ENCODE measurements at regions of chr11 and their contacts with region 1.

Region 1: DNA sequence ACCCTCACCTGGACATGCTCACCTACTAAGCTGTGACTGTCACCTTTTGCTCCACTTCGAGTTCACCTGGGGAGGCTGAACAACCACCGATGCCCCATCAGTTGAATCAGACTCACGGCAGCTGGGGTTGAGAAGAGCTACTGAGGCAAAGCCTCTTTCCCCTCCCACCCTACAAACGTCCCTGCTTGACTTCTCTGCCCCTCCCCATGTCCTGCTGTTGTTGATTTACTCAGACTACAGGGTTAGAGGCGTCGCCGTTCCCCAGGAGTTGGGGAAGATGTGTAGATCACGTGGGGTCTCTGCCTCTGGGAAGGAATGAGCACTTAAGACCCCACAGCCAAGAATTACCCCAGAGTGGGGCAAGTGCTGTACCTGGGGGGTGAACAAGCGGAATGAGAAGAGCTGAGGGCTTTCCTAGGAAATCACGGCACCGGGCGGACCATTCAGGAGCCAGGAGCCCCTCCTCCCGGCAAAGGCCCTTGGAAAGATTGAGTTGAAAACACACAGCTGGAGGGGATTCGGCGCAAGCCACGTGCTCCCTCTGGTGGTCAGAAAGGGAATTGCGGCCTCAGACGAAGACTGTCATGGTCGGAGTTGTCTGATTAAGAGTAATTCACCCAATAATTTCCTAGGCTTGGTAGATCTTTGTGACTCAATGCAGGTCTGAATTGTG is 7.0 kb downstream of the FXYD2 start:
- DNase-seq: peak; percentile 64 to 91 (median 76)
- ATAC-seq: peak; percentile 46
- H3K4me3 ChIP-seq: no peak overlapping the region
- H3K4me3 Mint-ChIP-seq: peak overlapping the region; percentile 4 to 83 (median 38)
- H3K27ac ChIP-seq: no peak overlapping the region
- H3K27ac Mint-ChIP-seq: peak overlapping the region; percentile 61 to 93 (median 80)
- H3K4me1 ChIP-seq: peaks cover 44 to 56% of the 10 kb centered on the region in 2 donors
- H3K4me1 Mint-ChIP-seq: peaks cover 35 to 63% (median 51%) of the 10 kb centered on the region in 7 donors
- H3K27me3 ChIP-seq: no peaks in the 10 kb centered on the region
- H3K27me3 Mint-ChIP-seq: no peaks in the 10 kb centered on the region

Region 2: DNA sequence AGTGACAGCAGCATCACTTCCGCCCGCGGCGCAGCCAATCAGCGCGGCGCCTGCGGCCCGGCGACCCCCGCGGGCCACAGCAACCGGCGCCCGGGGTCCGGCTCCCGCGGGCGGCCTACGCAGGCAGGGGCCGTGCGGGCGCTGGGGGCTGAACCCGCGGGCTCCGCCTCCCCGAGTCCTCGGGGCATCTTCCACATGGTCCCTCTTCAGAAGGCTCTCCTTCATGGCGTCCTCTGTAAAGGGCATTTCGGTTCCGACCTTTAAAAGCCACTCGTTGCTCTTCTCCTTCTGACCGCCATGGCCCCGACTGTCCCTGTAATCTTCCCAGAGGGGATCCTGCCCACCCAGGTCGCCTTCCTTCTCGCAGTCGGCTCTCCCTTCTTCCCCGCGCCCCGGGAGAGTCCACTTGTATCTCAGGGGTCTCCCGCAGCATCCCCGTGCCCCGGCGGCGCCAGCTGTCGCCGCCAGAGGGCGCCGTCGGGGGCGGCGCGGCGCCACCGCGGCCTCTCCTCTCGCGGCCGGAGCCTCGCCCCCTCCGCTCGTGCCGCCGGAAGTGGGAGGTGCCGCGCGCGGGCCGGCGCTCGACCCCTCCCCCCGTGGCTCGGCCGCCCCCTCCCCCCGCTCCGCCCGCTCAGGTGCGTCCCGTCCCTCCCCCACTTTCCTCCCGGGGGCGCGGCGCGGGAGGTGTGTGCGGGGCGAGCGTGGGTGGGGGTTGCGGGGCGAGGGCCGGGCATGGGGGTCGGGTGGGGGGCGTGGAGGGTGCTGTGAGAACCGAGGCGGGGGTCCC is 585.2 kb before region 1 on chr11 and contains the start of gene RNF214:
- CTCF ChIA-PET with region 1: no interaction called
- POLR2A ChIA-PET with region 1: no interaction called
- intact Hi-C with region 1: loop called in 1 of 2 experiments (anchors 1 kb)
- DNase-seq: peak; percentile 61 to 84 (median 73)
- ATAC-seq: peak; percentile 92
- H3K4me3 ChIP-seq: peak within 1 kb of the TSS; percentile 96
- H3K4me3 Mint-ChIP-seq: peak within 1 kb of the TSS; percentile 91 to 100 (median 98)
- H3K27ac ChIP-seq: peak within 1 kb of the TSS; percentile 97
- H3K27ac Mint-ChIP-seq: peak within 1 kb of the TSS; percentile 94 to 100 (median 99)
- H3K4me1 ChIP-seq: peaks cover 32 to 35% of the 10 kb centered on the region in 2 donors
- H3K4me1 Mint-ChIP-seq: peaks cover 40 to 55% (median 50%) of the 10 kb centered on the region in 7 donors
- H3K27me3 ChIP-seq: no peaks in the 10 kb centered on the region
- H3K27me3 Mint-ChIP-seq: no peaks in the 10 kb centered on the region
- total RNA-seq, gene RNF214: 16.6 to 36.0 (median 24.0) TPM

Region 3: DNA sequence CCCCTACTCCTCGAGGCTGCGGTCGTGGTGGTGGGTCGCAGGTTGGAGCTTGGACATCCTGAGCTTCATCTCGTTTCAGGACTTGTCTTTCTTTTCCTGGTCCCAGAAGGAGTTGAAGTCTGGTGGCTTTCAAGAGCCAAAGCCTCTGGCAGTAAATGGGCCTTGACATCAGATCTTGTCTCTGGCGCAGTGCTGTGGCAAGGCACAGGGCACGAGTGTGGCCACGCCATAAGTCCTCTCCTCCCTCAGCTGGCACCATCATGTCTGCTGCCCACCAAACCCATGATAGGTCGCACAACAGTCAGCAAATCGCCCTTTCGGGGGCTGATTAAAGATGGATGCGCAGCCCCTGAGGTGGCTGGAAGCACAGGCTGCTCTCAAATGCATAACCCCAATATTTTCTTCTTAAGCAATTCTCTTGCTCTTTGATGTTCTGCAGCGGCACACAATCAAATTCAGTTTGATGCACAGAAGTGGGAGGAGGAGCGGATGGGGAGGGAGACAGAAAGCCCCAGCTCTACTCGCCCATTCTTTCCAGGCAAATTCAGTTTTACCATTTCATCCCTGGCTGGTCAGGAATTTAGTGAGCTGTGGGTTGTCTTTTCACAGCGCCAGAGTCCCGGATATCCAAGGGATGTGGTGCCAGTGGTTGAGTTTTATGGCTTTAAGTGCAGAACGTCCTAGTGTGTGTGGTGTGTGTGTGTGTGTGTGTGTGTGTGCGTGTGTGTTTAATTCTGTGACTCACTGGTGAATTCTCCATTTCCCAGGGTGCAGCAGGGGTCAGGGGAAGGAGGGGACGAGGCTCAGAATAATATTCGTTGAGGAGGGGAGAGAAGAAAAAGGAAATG is 182.5 kb before region 1 on chr11:
- CTCF ChIA-PET with region 1: no interaction called
- POLR2A ChIA-PET with region 1: no interaction called
- intact Hi-C with region 1: no loop called
- DNase-seq: no peak
- ATAC-seq: no peak
- H3K4me3 ChIP-seq: no peak overlapping the region
- H3K4me3 Mint-ChIP-seq: no peak overlapping the region
- H3K27ac ChIP-seq: no peak overlapping the region
- H3K27ac Mint-ChIP-seq: peak overlapping the region in 1 of 9 donors; percentile 26
- H3K4me1 ChIP-seq: no peaks in the 10 kb centered on the region
- H3K4me1 Mint-ChIP-seq: no peaks in the 10 kb centered on the region
- H3K27me3 ChIP-seq: no peaks in the 10 kb centered on the region
- H3K27me3 Mint-ChIP-seq: peaks cover 0 to 7% (median 3%) of the 10 kb centered on the region in 5 donors

Region 4: DNA sequence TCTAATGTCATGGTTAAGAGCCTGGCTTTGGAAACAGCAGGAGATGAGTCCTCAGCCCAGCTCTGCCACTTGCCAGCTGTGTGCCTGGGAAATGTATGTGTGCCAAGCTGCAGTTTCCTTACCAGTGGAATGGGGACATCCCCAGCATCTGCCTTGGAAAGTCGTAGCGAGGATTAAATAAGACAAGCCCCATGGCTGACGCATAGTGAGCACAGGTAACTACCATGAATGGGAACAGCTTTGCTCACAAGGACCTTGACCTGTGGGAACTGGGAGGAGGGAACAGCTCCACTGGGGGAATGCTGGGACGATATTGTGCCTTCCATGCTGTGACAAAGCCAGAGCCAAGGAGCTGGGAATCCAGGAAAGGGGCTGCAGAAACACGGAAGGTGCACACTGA is 17.9 kb before region 1 on chr11:
- CTCF ChIA-PET with region 1: interaction called, 189 read pairs
- POLR2A ChIA-PET with region 1: interaction called, 4 read pairs
- intact Hi-C with region 1: no loop called
- DNase-seq: no peak
- ATAC-seq: no peak
- H3K4me3 ChIP-seq: no peak overlapping the region
- H3K4me3 Mint-ChIP-seq: no peak overlapping the region
- H3K27ac ChIP-seq: no peak overlapping the region
- H3K27ac Mint-ChIP-seq: no peak overlapping the region
- H3K4me1 ChIP-seq: peaks cover 0 to 15% of the 10 kb centered on the region in 2 donors
- H3K4me1 Mint-ChIP-seq: peaks cover 3 to 21% (median 16%) of the 10 kb centered on the region in 7 donors
- H3K27me3 ChIP-seq: peaks cover 5 to 14% of the 10 kb centered on the region in 2 donors
- H3K27me3 Mint-ChIP-seq: peaks cover 22 to 57% (median 26%) of the 10 kb centered on the region in 5 donors

Region 5: DNA sequence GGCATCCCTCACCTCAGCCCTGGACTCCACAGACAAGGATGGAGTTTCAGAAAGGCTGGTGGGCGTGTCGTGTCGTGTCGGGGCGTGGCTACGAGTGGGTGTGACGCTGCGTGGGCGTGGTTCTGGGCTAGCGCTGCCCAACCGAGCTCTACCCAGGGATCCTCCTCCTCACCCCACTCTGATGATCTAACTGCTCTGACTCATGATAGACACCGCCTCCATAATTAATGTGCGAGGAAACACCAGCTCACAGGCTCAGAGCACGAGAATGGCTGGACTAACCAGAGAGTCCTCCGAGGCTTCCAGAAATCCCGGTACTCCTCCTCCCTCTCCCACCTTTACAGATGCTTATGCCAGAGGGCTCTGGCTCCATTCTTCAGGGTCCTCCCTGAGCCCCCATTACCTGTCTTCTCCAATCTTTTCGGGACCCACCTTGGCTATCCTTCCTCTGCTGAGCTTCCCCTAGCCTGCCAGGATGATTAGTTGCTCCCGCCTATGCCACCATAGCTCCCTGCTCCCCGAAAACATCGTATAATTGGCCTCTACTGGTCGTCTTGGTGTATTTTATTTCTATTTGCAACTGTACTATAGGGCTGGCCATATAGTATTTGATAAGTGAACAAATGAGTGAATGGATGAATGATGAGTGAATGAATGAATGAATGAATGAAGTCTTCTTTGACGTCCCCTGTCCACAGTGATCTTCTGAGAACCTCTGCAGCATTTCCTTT is 89.9 kb after region 1 on chr11:
- CTCF ChIA-PET with region 1: no interaction called
- POLR2A ChIA-PET with region 1: no interaction called
- intact Hi-C with region 1: loop called in 1 of 2 experiments (anchors 5 kb)
- DNase-seq: peak in 5 of 9 donors; percentile 11 to 81 (median 28)
- ATAC-seq: peak; percentile 99
- H3K4me3 ChIP-seq: no peak overlapping the region
- H3K4me3 Mint-ChIP-seq: peak overlapping the region in 1 of 10 donors; percentile 63
- H3K27ac ChIP-seq: no peak overlapping the region
- H3K27ac Mint-ChIP-seq: peak overlapping the region in 2 of 9 donors; percentile 3 to 83
- H3K4me1 ChIP-seq: no peaks in the 10 kb centered on the region
- H3K4me1 Mint-ChIP-seq: peaks cover 0 to 19% (median 0%) of the 10 kb centered on the region in 7 donors
- H3K27me3 ChIP-seq: no peaks in the 10 kb centered on the region
- H3K27me3 Mint-ChIP-seq: peaks cover 0 to 2% (median 0%) of the 10 kb centered on the region in 5 donors

Region 6: GRCh38 chr11:119381181-119381988 is 1563.9 kb after region 1 on chr11 and contains the start of gene USP2:
- CTCF ChIA-PET with region 1: no interaction called
- POLR2A ChIA-PET with region 1: no interaction called
- intact Hi-C with region 1: loop called in 1 of 2 experiments (anchors 5 kb)
- DNase-seq: peak; percentile 94 to 98 (median 97)
- ATAC-seq: peak; percentile 99
- H3K4me3 ChIP-seq: peak within 1 kb of the TSS; percentile 81
- H3K4me3 Mint-ChIP-seq: no peak within 1 kb of the TSS
- H3K27ac ChIP-seq: peak within 1 kb of the TSS; percentile 71
- H3K27ac Mint-ChIP-seq: peak within 1 kb of the TSS in 1 of 9 donors; percentile 87
- H3K4me1 ChIP-seq: peaks cover 9 to 14% of the 10 kb centered on the region in 2 donors
- H3K4me1 Mint-ChIP-seq: peaks cover 0 to 13% (median 5%) of the 10 kb centered on the region in 7 donors
- H3K27me3 ChIP-seq: no peaks in the 10 kb centered on the region
- H3K27me3 Mint-ChIP-seq: peaks cover 0 to 9% (median 0%) of the 10 kb centered on the region in 5 donors
- total RNA-seq, gene USP2: 0.07 to 1.1 (median 0.43) TPM